Heart right ventricle (tissue), 16 donors: ENCODE measurements at regions of chr17 and their contacts with region 1.

Region 1: DNA sequence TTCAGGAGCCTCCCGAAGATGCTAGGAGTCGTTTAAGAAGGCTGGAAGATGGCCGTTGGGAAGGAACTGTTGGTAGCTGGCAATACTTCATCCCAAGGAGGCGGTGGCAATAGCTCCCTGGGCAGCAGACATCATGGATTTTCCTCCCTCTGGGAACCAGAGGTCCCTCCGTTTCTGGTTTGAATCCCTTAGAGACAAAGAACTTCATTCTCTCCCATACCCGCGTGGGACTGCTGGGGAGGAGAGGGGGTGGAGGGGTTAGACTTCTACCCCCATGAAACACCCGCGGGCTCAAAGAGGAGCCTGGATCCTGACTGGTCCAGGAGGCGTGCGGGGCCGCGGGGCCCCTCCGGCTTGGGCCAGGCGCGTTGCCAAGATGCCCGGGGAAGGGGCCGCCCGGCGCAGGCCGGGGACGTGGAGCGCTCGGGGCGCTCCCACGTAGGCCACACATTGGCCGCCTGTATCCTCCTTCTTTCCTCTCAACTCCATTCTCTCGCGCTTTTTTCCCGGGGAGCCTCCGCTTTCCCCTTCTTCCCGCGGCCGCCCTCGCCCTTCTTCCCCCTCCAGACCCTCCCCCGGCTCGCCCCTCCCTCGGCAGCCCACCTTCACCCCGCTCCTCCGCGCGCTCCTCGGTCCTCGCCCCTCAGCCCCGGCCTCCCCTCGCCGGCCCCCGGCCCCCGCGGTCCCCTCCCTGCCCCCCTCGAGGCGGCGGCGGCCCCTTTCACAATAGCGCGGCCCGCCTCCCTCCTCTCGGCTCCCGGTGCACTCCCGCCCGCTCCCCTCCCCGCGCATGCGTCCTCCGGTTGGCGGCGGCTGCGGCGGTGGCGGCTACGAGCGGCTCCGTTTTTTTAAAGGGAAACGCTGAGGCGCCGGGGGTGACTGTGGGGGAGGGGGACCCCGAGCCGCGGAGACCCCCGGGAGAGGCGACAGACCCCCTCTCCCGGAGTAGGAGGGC is at the start of gene MSL1:
- DNase-seq: peak; percentile 90 to 92
- ATAC-seq: peak; percentile 89 to 93 (median 90)
- H3K4me3 ChIP-seq: peak within 1 kb of the TSS; percentile 89 to 100 (median 100)
- H3K27ac ChIP-seq: peak within 1 kb of the TSS; percentile 92 to 99 (median 97)
- H3K4me1 ChIP-seq: peaks cover 5 to 39% (median 31%) of the 10 kb centered on the region in 9 donors
- H3K27me3 ChIP-seq: no peaks in the 10 kb centered on the region
- CTCF ChIP-seq: no peak
- total RNA-seq, gene MSL1: 26.3 to 57.4 (median 37.7) TPM

Region 2: GRCh38 chr17:40139566-40140058 is 18.2 kb after region 1 on chr17:
- intact Hi-C with region 1: loop called in 2 of 10 experiments (anchors 2 kb)
- DNase-seq: no peak
- ATAC-seq: peak in 6 of 8 donors; percentile 2 to 28 (median 6)
- H3K4me3 ChIP-seq: peak overlapping the region; percentile 48 to 86 (median 66)
- H3K27ac ChIP-seq: peak overlapping the region; percentile 85 to 99 (median 96)
- H3K4me1 ChIP-seq: peaks cover 5 to 43% (median 30%) of the 10 kb centered on the region in 9 donors
- H3K27me3 ChIP-seq: no peaks in the 10 kb centered on the region
- CTCF ChIP-seq: no peak